Psoas muscle (tissue), 8 donors: ENCODE measurements at regions of chr1 and their contacts with region 1.

Region 1: DNA sequence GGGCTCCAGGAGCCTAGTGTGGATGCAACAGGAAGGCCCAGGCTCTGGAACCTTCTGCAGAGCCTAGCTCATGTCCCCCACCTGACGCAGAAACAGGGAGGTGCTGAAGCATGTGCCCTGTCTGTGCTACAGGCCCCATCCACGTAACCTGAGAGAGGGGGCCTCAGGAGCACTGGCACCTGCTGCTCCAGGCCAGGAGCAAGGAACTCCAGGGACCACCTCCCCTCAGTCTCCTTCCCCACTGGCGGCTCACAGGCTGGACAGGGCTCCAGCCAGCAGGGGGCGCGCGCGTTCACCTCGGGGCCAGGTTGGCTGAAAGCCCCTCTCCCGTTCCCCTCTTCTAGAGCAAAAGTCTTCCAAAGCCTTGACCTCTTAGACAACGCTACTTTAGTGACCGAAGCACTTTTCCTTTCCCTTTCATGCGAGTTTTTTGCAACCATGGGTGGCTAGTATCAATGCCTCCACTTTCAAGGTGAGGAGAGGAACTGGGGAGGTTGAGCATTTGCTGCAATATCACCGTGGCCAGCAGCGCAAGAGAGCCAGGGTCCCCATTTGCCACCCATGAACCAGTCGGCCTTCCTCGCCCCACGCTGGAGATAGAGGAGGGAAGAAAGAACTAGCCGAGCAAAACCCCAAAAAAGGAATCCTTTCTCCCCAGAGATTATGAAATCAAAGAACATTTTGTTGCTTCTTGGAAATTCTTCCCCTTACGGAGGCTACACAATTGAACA is 52.4 kb upstream of the GPR157 start:
- DNase-seq: peak; percentile 77 to 86
- ATAC-seq: peak; percentile 67 to 85 (median 72)
- H3K4me3 ChIP-seq: peak overlapping the region; percentile 76
- H3K27ac ChIP-seq: no peak overlapping the region
- H3K4me1 ChIP-seq: no peaks in the 10 kb centered on the region
- H3K27me3 ChIP-seq: peaks cover 0 to 14% (median 0%) of the 10 kb centered on the region in 3 donors
- CTCF ChIP-seq: peak; percentile 95

Region 2: DNA sequence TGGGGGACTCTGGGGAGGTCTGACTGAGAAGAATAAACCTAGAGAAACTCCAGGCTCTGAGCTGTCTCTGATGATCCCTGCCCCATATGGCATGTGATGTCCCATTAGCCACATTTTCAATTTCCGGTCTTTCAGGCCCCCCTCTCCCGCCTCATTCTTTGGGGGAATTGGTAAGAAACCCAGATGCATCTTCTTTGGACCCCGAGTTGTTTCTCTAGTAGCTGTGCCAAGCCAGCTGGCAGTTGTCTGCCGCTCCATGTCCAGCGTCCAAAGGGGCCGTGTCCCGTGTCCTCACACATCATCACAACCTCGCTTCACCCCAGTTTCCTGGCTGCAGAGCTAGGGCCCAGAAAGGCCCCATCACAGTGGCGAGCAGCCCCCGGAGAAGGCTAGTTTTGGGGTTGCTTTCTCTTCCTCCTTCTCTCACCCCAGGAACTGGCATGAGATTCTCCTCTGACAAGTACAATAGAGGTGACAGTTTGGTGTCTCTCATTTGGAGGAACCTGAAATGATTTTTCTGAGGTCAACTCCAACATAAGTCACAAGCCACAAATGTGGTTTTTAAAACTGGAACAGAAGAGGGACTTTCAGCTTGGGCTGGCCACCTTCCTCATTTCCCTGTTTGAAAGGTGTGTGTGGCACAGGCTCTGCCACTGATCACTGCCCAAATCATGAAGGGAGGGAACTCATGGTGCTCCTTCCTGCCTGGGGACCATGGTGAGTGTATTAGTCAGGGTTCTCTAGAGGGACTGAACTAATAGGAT is 46.1 kb before region 1 on chr1:
- intact Hi-C with region 1: loop called (anchors 5 kb)
- DNase-seq: no peak
- ATAC-seq: peak in 1 of 4 donors; percentile 39
- H3K4me3 ChIP-seq: no peak overlapping the region
- H3K27ac ChIP-seq: no peak overlapping the region
- H3K4me1 ChIP-seq: no peaks in the 10 kb centered on the region
- H3K27me3 ChIP-seq: no peaks in the 10 kb centered on the region
- CTCF ChIP-seq: no peak

Region 3: DNA sequence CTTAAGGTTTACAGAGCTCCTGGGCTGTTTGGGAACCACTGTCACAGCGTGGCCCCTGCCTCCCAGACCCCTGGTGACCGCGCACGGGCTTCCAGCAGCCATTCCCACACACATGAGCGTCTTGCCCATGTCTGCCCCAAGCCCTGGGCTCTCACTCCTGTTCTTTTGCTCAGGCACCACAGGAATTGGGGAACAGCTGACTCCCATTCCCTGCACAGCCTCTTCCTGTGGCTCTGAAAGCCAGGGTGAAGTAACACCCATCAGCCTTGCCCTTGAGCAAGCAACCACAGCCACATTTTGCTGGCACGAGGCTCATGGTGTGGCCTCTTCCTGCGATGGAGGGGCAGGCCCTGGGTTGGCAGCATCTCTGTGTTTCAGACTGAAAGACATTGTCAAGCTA is 38.1 kb before region 1 on chr1:
- intact Hi-C with region 1: loop called (anchors 5 kb)
- DNase-seq: peak in 1 of 2 donors; percentile 50
- ATAC-seq: peak in 2 of 4 donors; percentile 26 to 38
- H3K4me3 ChIP-seq: no peak overlapping the region
- H3K27ac ChIP-seq: no peak overlapping the region
- H3K4me1 ChIP-seq: no peaks in the 10 kb centered on the region
- H3K27me3 ChIP-seq: no peaks in the 10 kb centered on the region
- CTCF ChIP-seq: no peak

Region 4: GRCh38 chr1:9338397-9339246 is 157.3 kb after region 1 on chr1:
- intact Hi-C with region 1: no loop called
- DNase-seq: no peak
- ATAC-seq: peak in 2 of 4 donors; percentile 19 to 41
- H3K4me3 ChIP-seq: no peak overlapping the region
- H3K27ac ChIP-seq: peak overlapping the region; percentile 30
- H3K4me1 ChIP-seq: no peaks in the 10 kb centered on the region
- H3K27me3 ChIP-seq: no peaks in the 10 kb centered on the region
- CTCF ChIP-seq: no peak